Activated CD8-positive, alpha-beta T cell treated with anti-CD3 and anti-CD28 coated beads for 36 hours (primary cell): ENCODE measurements at regions of chr6 and their contacts with region 1.

Region 1: DNA sequence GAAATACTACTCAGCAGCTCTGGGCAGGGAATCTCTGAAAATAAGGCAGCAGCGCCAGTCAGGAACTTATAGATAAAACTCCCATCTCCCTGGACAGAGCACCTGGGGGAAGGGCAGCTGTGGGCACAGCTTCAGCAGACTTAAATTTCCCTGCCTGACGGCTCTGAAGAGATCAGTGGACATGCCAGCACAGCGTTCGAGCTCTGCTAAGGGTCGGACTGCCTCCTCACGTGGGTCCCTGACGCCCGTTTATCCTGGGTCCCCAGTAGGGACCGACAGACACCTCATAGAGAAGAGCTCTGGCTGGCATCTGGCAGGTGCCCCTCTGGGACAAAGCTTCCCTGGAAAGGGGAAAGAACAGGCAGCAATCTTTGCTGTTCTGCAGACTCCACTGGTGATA is 59.0 kb downstream of the COL21A1 start:
- DNase-seq: no peak
- ATAC-seq: no peak
- H3K4me3 Mint-ChIP-seq: no peak overlapping the region
- H3K27ac Mint-ChIP-seq: no peak overlapping the region
- H3K4me1 Mint-ChIP-seq: no peaks in the 10 kb centered on the region
- H3K27me3 Mint-ChIP-seq: no peaks in the 10 kb centered on the region
- CTCF ChIP-seq: no peak

Region 2: GRCh38 chr6:56246881-56247653 is 58.6 kb after region 1 on chr6 and contains the start of gene COL21A1:
- CTCF ChIA-PET with region 1: no interaction called
- POLR2A ChIA-PET with region 1: no interaction called
- intact Hi-C with region 1: loop called (anchors 10 kb)
- DNase-seq: no peak
- ATAC-seq: no peak
- H3K4me3 Mint-ChIP-seq: no peak within 1 kb of the TSS
- H3K27ac Mint-ChIP-seq: no peak within 1 kb of the TSS
- H3K4me1 Mint-ChIP-seq: no peaks in the 10 kb centered on the region
- H3K27me3 Mint-ChIP-seq: peaks cover 9% of the 10 kb centered on the region
- CTCF ChIP-seq: no peak
- total RNA-seq, gene COL21A1: not detected